Right ventricle myocardium superior (tissue), 1 donor: ENCODE measurements at regions of chr2 and their contacts with region 1.

Region 1: DNA sequence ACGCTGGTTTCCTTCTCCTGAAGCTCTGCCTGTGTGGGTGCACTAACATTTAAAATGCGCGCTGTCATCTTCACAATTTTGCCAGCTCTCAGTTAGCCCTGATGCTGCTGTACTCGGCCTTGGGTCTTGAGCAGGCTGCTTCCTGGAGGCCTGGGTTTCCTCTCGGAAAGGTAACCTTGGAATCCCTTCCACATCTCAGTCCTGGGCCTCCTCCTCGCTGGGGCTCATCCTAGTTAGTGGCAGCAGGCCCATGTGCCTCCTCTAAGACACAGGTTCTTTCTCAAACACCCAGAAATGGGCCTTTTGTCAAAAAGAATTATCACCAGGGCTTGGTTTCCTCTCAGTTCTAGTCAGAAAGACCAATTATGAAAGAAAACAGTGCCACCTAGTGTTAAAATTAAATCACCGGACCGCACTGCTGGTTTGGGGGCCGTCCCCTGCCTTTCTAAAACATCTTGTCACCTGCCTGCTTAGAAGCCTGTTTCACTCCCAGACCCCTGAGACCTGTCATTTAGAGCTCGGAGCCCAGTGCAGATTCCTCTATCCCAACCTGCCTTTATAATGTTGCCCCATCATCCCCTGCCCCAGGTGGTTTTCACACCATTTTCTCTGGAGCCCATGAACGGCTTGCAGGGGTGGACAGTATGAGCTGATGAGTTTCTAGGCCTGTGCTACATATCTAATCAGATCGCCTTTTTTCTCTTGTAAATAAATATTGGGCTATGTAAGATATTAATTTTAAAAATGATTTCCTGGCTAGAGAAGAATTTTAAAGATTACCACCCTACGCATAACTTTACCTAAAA is 42.4 kb downstream of the HK2 start:
- DNase-seq: no peak
- ATAC-seq: peak; percentile 87

Region 2: GRCh38 chr2:74690571-74690970 is 185.7 kb before region 1 on chr2:
- intact Hi-C with region 1: loop called (anchors 5 kb)
- DNase-seq: no peak
- ATAC-seq: peak; percentile 82

Region 3: DNA sequence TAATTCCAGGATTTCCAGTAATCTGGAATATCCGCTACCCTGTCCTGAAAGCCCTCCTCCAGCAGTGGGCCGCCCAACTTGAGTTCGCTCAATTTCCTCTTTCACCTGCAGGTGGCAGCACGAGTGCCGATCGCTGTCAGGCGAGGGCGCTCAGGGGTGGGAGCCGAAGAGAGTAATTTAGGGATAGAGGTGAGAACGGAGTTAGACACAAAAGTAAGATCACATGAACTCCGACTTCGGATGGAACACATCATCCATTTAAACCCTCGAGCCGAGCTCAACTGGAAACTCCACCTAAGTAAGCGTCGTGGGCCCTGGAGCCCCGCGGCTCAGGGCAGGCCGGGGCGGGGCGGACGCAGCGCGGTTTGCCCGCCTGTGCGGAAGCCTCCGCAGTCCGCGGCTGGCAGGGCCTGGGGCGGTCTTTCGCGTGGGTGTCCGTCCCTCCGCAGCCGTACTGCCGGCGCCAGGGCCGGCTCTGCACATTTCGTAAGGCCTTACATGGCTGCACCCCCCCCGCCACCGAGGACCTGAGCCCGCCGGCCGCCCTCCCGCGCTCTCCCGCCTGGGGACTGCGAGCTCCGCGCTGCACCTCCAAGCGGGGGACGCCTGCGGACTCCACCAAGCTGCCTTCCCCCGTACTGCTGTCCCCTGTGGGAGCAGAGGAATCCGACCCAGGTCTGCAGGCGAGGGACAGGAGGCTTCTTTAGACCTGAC is 161.0 kb before region 1 on chr2:
- intact Hi-C with region 1: loop called (anchors 2 kb)
- DNase-seq: peak; percentile 86
- ATAC-seq: peak; percentile 98

Region 4: DNA sequence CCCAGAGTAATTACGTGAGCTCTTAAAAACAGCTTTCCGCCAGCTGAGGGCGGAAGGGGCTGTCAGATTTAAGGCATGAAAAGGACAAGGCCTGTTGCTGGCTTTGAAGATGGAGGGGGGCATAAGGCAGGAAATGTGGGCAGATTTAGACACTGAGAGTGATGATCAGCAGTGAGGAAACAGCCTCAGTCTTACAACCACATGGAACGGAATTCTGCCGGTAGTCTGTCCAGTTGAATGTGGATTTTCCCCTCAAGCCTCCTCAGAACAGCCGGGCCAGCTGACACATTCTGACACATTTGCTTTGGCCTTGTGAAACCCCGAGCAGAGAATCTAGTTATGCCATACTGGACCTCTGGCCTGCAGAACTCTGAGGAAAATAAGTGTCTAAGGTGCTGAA is 98.7 kb after region 1 on chr2:
- intact Hi-C with region 1: no loop called
- DNase-seq: no peak
- ATAC-seq: no peak